ENCODE measurements at regions of chr17 and their contacts with region 1.

Region 1: DNA sequence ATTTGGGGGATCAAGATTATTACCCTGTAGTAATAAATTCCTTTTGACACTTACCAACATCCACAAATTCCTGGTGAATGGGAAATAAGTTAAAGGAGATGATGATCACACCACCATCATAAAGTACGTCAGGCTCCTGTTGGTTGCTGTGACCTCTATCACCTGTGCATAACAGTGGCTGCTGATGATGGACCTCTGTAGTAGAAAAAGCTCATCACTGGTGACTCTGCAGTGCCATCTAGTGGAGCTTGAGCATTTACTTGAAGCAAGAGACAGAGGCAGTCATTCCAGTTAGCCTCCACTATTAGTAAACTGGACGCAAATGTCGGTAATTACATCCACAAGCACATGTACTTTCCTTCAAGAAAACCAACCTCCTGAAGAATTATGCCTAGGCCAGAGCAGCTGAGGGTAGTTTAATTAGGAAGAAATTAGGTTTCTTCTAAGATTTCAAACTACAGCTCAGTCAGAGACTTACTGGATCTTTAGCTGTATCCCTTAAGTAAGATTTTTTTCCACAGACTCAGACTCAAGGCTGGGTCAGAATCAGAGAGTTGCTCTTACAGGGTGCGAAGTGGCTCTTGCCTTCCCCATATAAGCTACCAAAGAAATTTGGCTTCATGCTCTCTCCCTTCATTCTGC is 39.3 kb downstream of the CYB561 start:
- DNase-seq: peak; percentile 88
- H3K4me3 ChIP-seq: no peak overlapping the region
- H3K27ac ChIP-seq: no peak overlapping the region
- H3K4me1 ChIP-seq: no peaks in the 10 kb centered on the region
- CTCF ChIP-seq: peak; percentile 96

Region 2: GRCh38 chr17:62671583-62672312 is 735.1 kb before region 1 on chr17:
- CTCF ChIA-PET with region 1: no interaction called
- POLR2A ChIA-PET with region 1: no interaction called
- intact Hi-C with region 1: loop called (anchors 2 kb)
- DNase-seq: no peak
- H3K4me3 ChIP-seq: no peak overlapping the region
- H3K27ac ChIP-seq: no peak overlapping the region
- H3K4me1 ChIP-seq: no peaks in the 10 kb centered on the region
- CTCF ChIP-seq: no peak

Region 3: GRCh38 chr17:63082273-63082993 is 324.4 kb before region 1 on chr17:
- CTCF ChIA-PET with region 1: no interaction called
- POLR2A ChIA-PET with region 1: no interaction called
- intact Hi-C with region 1: loop called (anchors 5 kb)
- DNase-seq: no peak
- H3K4me3 ChIP-seq: no peak overlapping the region
- H3K27ac ChIP-seq: no peak overlapping the region
- H3K4me1 ChIP-seq: no peaks in the 10 kb centered on the region
- CTCF ChIP-seq: peak; percentile 68

Region 4: GRCh38 chr17:63378411-63379375 is 28.1 kb before region 1 on chr17:
- CTCF ChIA-PET with region 1: no interaction called
- POLR2A ChIA-PET with region 1: no interaction called
- intact Hi-C with region 1: no loop called
- DNase-seq: no peak
- H3K4me3 ChIP-seq: no peak overlapping the region
- H3K27ac ChIP-seq: no peak overlapping the region
- H3K4me1 ChIP-seq: no peaks in the 10 kb centered on the region
- CTCF ChIP-seq: no peak

Region 5: DNA sequence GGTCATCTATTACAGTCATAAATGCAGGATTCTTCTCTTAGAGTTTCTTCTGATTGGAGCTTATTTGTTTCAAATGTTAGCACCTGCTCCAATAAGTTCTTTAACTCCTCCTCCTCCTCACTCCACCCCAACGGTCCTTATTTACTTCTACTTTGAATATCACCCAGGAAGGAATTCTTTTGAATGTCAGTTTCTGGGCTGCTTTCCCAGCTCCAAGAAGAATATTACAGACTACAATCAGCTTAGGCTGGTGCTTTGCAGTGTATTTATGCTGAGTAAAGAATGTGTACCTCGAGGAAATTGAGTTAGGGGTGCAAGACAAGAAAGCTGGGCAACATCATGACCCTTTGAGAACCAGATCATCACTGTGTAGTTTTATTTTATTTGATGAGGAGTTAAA is 246.2 kb after region 1 on chr17:
- CTCF ChIA-PET with region 1: no interaction called
- POLR2A ChIA-PET with region 1: no interaction called
- intact Hi-C with region 1: no loop called
- DNase-seq: no peak
- H3K4me3 ChIP-seq: no peak overlapping the region
- H3K27ac ChIP-seq: no peak overlapping the region
- H3K4me1 ChIP-seq: no peaks in the 10 kb centered on the region
- CTCF ChIP-seq: no peak

Measured in OCI-LY7 (cell line).